ENCODE measurements at regions of chr15 and their contacts with region 1.

Region 1: GRCh38 chr15:76065267-76065666 is 5.5 kb downstream of the TMEM266 start:
- DNase-seq: no peak
- ATAC-seq: peak in 1 of 8 donors; percentile 41
- H3K4me3 ChIP-seq: no peak overlapping the region
- H3K27ac ChIP-seq: no peak overlapping the region
- H3K4me1 ChIP-seq: peaks cover 0 to 14% (median 2%) of the 10 kb centered on the region in 9 donors
- H3K27me3 ChIP-seq: peaks cover 0 to 71% (median 38%) of the 10 kb centered on the region in 7 donors
- CTCF ChIP-seq: no peak

Region 2: GRCh38 chr15:76127880-76128279 is 62.6 kb after region 1 on chr15:
- intact Hi-C with region 1: loop called in 1 of 10 experiments (anchors 5 kb)
- DNase-seq: no peak
- ATAC-seq: no peak
- H3K4me3 ChIP-seq: no peak overlapping the region
- H3K27ac ChIP-seq: no peak overlapping the region
- H3K4me1 ChIP-seq: no peaks in the 10 kb centered on the region
- H3K27me3 ChIP-seq: peaks cover 0 to 75% (median 22%) of the 10 kb centered on the region in 7 donors
- CTCF ChIP-seq: no peak

Measured in heart right ventricle (tissue), 16 donors.